Activated naive CD4-positive, alpha-beta T cell treated with anti-CD3 and anti-CD28 coated beads, Interleukin-2, amount 10 ng/mL, durations not matched to agents 7 days and 5 days (primary cell): ENCODE measurements at regions of chr18 and their contacts with region 1.

Region 1: GRCh38 chr18:23626451-23627279 is 36.0 kb downstream of the ANKRD29 start:
- DNase-seq: no peak
- H3K4me3 Mint-ChIP-seq: no peak overlapping the region
- H3K27ac Mint-ChIP-seq: no peak overlapping the region
- H3K4me1 Mint-ChIP-seq: peaks cover 7% of the 10 kb centered on the region
- H3K27me3 Mint-ChIP-seq: peaks cover 23% of the 10 kb centered on the region

Region 2: DNA sequence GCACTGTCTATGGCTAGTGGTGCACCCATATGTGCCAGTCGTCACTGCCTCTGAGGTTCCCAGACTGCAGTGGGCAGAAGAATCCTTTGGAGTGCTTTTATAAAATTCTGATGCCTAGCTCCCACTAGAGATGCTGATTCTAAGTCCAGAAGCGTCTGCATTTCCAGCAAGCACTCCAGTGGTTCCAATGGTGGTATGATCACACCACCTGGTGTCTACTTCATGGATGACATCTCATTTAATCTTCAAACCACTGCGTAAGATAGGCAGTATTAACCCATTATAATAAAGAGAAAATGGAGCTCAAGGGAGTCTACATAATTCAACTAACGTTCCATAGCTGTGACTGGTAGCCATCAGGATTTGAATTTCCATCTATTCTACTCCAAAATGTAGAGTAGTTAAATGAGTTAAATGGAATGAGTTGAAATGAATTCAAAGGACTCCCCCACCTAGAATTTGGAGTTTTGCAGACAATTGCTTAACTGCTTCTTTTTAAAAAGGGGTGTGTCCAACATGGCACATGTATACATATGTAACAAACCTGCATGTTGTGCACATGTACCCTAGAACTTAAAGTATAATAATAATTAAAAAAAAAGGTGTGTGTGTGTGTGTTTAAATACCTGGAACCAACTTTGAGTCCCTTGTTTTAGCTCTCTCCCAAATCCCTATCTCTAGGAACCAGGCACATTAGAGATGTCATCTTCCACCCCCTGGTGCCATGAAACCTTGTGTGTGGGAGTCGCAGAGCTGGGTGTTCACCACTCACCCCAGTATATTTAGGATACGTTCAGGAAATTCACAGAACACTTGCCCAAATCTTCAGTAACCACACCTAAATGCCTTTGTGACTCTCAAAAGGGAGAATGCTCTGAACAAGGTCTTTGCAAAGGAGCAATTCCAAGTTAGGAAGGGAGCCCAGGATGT is 76.7 kb after region 1 on chr18:
- CTCF ChIA-PET with region 1: interaction called, 29 read pairs
- DNase-seq: peak; percentile 44
- H3K4me3 Mint-ChIP-seq: no peak overlapping the region
- H3K27ac Mint-ChIP-seq: no peak overlapping the region
- H3K4me1 Mint-ChIP-seq: no peaks in the 10 kb centered on the region
- H3K27me3 Mint-ChIP-seq: peaks cover 42% of the 10 kb centered on the region